GM10248 (cell line): ENCODE measurements at regions of chr10 and their contacts with region 1.

Region 1: DNA sequence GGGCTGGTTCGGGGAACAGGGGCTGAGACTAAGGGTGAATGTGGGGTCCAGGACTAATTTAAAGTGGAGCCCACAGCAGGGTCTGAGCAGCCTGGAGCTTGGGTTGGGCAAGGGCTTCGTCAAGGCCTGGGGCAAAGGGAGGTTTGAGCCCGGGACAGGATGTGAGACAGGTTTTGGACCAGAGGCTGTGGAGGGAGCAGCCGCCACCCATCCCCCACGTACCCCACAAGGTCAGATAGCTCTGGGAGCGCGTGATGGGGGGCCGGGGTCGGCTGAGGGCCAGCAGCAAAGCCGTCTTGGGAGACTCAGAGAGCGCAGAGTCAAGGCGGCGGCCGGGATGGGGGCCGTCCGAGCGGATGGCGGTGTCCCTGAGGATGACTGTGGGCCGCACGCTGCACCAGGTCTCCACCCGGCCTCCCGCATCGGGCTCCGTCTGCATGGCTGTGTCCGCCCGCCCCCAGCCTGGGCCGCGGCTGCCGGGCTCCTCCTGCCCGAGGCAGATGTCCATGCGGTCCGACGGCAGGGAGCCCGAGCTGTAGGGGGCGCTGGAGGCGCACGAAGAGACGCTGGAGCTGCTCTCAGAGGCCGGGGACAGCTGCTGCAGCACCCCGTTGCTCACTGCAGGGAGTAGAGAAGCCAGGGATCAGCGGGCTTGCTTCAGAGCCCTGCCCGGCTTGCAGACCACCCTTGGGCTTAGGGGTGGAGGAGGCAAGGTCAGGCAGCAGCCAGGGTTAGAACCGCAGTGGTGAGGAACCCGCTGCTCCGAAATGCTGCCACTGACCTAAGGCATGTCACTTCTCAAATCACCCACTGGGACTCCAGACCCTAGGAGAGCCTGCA is 12.1 kb downstream of the PDZD7 start:
- DNase-seq: peak; percentile 85
- CTCF ChIP-seq: peak; percentile 70

Region 2: GRCh38 chr10:100245484-100246220 is 773.2 kb before region 1 on chr10:
- CTCF ChIA-PET with region 1: no interaction called
- POLR2A ChIA-PET with region 1: no interaction called
- DNase-seq: no peak
- CTCF ChIP-seq: no peak

Region 3: DNA sequence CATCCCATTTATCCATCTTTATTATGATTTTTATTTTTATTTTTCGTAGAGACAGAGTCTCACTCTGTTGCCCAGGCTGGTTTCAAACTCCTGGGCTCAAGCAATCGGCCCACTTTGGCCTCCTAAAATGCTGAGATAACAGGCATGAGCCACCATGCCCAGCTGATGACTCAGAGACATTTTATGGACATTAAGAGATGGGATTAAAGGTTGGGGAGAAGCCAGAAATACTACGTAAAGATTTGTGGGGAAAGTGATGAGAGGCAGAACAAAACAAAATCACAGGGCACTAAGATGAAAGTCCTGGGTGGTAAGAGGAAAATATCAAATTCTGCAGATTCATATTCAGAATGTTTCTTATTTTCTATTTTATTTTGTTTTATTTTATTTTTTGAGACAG is 548.5 kb before region 1 on chr10:
- CTCF ChIA-PET with region 1: no interaction called
- POLR2A ChIA-PET with region 1: no interaction called
- DNase-seq: no peak
- CTCF ChIP-seq: no peak

Region 4: GRCh38 chr10:100998991-100999741 is 19.7 kb before region 1 on chr10:
- CTCF ChIA-PET with region 1: interaction called, 101 read pairs
- POLR2A ChIA-PET with region 1: no interaction called
- DNase-seq: peak; percentile 92
- CTCF ChIP-seq: peak; percentile 77

Region 5: DNA sequence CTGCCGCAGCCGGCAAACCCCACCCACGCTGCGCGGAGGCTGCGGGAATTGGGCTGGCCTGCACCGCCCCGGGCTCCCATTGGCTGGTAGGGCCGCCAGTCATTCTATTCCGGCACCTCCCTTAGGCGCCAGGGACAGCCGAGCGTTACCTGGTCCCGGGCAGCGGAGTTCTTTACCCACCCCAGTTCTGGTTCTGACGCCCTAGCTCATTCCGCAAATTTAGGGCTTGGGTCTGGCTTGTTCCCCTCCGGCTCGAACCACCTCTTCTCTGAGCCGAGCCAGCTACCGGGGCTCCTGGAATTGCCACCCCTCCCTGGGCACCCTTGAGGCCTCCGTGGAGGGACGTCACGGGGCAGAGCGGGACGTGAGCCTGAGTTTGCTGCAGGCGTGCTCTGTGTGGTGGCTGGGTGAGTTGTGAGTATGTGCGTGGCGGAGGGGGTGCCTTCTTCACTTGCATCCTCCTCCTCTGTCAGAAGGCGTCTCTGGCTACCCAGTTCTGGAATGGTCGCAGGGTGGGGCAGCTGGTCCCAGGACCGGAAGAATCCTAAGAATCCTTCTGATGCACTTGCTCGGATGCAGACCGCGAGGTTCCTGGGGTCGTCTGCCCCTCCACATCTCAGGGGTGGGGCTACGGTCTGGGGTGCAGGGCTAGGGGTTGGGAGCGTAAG is 12.4 kb after region 1 on chr10 and contains the starts of genes PDZD7 and SFXN3:
- CTCF ChIA-PET with region 1: interaction called, 111 read pairs
- POLR2A ChIA-PET with region 1: no interaction called
- DNase-seq: peak; percentile 97
- CTCF ChIP-seq: no peak

Region 6: GRCh38 chr10:101050208-101051069 is 31.6 kb after region 1 on chr10:
- CTCF ChIA-PET with region 1: interaction called, 21 read pairs
- POLR2A ChIA-PET with region 1: no interaction called
- DNase-seq: peak; percentile 85
- CTCF ChIP-seq: peak; percentile 82

Region 7: DNA sequence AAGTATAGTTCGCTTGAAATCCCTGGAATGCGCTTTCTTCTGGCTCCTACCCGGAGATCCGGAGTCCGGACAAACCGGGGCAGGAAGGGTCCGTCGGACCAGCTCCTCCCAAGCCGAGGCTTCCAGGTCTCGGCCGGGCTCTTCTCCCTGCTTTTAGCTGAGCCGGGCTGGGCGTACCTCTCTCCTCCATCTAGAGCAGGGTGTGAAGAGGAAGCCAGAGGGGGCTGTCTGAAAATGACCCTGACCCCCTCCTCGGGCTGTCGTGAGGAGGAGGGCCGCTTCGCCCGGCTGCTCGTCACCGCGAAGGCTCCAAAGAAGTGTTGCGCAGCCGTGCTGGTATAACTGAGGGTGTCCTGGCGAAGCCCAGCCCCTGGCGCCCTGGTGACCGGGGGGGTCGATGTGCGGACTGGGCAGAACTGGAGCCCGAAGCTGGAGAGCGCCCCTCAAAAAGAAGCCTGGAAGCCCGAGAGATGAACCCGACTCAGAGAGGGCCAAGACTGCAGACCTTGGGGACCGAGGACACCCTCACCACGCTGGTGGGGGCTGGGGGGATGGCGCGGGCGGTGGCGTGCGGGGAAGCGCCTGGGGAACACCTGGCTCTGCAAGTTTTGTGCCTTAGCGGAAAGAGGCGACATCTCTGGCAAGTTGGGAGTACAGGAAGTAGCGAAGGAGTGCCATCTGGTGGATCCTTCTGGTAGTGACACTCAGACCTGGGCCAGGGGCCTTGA is 48.7 kb after region 1 on chr10:
- CTCF ChIA-PET with region 1: interaction called, 27 read pairs
- POLR2A ChIA-PET with region 1: no interaction called
- DNase-seq: peak; percentile 84
- CTCF ChIP-seq: peak; percentile 78

Region 8: GRCh38 chr10:101495324-101495925 is 476.6 kb after region 1 on chr10:
- CTCF ChIA-PET with region 1: no interaction called
- POLR2A ChIA-PET with region 1: no interaction called
- DNase-seq: no peak
- CTCF ChIP-seq: peak; percentile 44

Region 9: GRCh38 chr10:102704915-102705314 is 1686.1 kb after region 1 on chr10:
- CTCF ChIA-PET with region 1: no interaction called
- POLR2A ChIA-PET with region 1: no interaction called
- DNase-seq: no peak
- CTCF ChIP-seq: no peak